ENCODE measurements at regions of chr1 and their contacts with region 1.

Region 1: DNA sequence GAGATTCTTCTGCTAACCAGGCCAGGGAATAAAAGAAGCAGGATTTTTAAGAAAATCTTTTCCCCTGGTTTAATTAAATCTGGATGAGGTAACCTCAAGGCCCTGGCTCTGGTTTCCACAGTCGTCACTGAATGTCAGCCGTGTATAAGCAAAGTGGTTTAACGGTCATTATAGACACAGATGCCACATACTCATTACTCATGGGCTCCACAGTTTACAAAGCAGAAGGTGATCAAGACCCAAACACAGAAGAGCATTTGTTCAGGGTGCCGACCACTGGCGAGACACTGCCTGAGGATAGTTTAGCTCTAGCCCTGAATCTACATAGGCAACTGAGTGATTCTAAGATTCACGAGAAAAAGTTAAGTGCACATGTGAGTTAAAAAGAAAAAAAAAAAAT is 27.8 kb upstream of the RAP1GAP start:
- DNase-seq: no peak
- H3K4me3 ChIP-seq: no peak overlapping the region
- H3K27me3 ChIP-seq: no peaks in the 10 kb centered on the region
- CTCF ChIP-seq: no peak

Region 2: GRCh38 chr1:22053861-22054770 is 357.2 kb after region 1 on chr1:
- CTCF ChIA-PET with region 1: no interaction called
- POLR2A ChIA-PET with region 1: interaction called, 10 read pairs
- DNase-seq: no peak
- H3K4me3 ChIP-seq: peak overlapping the region; percentile 86
- H3K27me3 ChIP-seq: no peaks in the 10 kb centered on the region
- CTCF ChIP-seq: no peak